Pancreas (tissue), 10 donors: ENCODE measurements at regions of chr7 and their contacts with region 1.

Region 1: GRCh38 chr7:74544706-74545469 is 91.2 kb downstream of the GTF2IRD1 start:
- DNase-seq: peak in 5 of 6 donors; percentile 54 to 69 (median 62)
- ATAC-seq: peak; percentile 85 to 97 (median 89)
- H3K4me3 ChIP-seq: no peak overlapping the region
- H3K27ac ChIP-seq: no peak overlapping the region
- H3K4me1 ChIP-seq: no peaks in the 10 kb centered on the region
- H3K27me3 ChIP-seq: no peaks in the 10 kb centered on the region
- CTCF ChIP-seq: peak; percentile 40 to 53 (median 48)

Region 2: DNA sequence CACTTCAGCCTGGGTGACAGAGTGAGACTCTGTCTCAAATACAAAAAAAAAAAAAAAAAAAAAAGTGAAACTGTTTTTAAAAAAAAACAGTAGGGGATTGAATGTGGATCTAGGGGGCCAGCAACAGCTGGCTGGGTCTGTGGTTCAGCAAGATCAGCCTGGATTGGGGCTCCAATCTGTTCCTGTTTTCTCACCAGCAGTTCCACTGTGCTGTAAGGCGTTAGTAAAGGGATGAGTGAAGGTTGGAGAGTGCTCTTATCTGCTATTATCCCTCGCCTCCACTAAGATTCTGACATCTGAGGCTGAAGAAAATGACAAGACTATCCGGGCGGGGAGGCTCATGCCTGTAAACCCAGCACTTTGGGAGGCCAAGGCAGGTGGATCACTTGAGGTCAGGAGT is 132.8 kb before region 1 on chr7:
- intact Hi-C with region 1: loop called in 1 of 3 experiments (anchors 5 kb)
- DNase-seq: no peak
- ATAC-seq: no peak
- H3K4me3 ChIP-seq: no peak overlapping the region
- H3K27ac ChIP-seq: no peak overlapping the region
- H3K4me1 ChIP-seq: no peaks in the 10 kb centered on the region
- H3K27me3 ChIP-seq: no peaks in the 10 kb centered on the region
- CTCF ChIP-seq: no peak

Region 3: GRCh38 chr7:74429153-74429747 is 115.6 kb before region 1 on chr7:
- intact Hi-C with region 1: loop called in 1 of 3 experiments (anchors 5 kb)
- DNase-seq: peak in 2 of 6 donors; percentile 25 to 32
- ATAC-seq: peak; percentile 37 to 70 (median 54)
- H3K4me3 ChIP-seq: no peak overlapping the region
- H3K27ac ChIP-seq: peak overlapping the region in 1 of 4 donors; percentile 60
- H3K4me1 ChIP-seq: no peaks in the 10 kb centered on the region
- H3K27me3 ChIP-seq: no peaks in the 10 kb centered on the region
- CTCF ChIP-seq: no peak

Region 4: DNA sequence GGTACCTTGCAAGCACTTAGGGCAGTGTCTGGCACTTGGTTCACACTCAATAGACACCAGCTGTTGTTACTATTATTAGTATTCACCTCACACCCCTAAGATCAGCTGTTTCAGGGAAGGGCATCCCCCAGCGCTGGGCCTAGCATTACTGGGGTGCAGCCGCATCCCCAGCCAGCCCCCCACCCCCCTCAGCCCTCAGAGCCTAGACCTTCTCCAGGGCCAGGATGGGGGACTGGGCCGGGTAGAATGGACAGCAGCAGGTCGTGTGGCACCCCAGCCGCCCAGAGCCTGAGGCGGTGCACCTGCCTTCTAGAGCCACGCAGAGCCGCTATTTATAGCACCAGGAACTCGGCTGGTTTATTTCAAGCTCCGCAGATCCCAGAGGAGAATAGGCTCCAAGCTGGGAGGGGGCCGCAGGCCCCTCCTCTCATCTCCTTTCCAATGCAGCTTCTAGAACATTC is 30.7 kb before region 1 on chr7:
- intact Hi-C with region 1: no loop called
- DNase-seq: no peak
- ATAC-seq: peak in 2 of 4 donors; percentile 50 to 66
- H3K4me3 ChIP-seq: no peak overlapping the region
- H3K27ac ChIP-seq: no peak overlapping the region
- H3K4me1 ChIP-seq: no peaks in the 10 kb centered on the region
- H3K27me3 ChIP-seq: no peaks in the 10 kb centered on the region
- CTCF ChIP-seq: no peak